HCT116 (cell line): ENCODE measurements at regions of chr18 and their contacts with region 1.

Region 1: DNA sequence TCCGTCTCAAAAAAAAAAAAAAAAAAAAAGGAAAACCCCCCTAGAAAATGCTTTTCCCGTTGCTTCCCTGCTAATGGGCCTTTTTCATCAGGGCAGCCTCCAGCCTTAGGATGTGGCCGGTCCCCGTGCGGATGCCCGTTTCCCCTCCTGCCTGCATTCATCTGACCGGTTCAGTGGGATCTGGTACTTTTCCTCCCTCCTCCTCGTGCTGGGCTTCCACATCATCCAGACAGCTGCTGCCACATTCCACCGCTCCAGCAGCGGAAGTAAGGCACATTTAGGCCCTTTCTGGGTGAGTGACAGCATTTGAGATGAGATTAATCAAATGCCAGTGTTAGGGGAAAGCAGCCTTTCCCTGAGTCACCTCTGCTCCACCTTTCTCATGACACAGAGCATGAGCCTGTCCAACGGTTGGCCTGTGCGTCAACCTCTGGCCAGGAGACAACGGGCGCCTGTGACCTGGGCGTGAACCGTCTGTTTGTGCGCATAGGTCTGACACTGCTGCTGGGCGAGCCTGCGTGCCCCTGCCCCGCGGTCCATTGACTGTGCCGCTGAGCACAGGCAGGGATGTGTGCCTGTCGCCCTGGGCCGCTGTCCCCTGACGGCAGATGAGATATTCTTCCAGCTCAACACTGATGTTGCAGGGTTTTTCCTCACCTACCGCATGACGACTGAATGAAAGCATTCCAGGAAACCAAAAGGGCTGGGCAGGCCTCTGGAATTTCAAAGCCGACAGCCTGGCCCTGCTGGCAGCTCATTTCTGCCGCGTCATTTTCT is 174.0 kb downstream of the TGIF1 start:
- DNase-seq: peak; percentile 96
- ATAC-seq: peak; percentile 77
- H3K4me3 ChIP-seq: peak overlapping the region; percentile 30 to 31
- H3K27ac ChIP-seq: peak overlapping the region; percentile 100
- H3K4me1 ChIP-seq: peaks cover 86 to 96% of the 10 kb centered on the region in 2 experiments
- H3K27me3 ChIP-seq: no peaks in the 10 kb centered on the region
- CTCF ChIP-seq: no peak
- POLR2A ChIP-seq: no peak
- RAD21 ChIP-seq: no peak

Region 2: DNA sequence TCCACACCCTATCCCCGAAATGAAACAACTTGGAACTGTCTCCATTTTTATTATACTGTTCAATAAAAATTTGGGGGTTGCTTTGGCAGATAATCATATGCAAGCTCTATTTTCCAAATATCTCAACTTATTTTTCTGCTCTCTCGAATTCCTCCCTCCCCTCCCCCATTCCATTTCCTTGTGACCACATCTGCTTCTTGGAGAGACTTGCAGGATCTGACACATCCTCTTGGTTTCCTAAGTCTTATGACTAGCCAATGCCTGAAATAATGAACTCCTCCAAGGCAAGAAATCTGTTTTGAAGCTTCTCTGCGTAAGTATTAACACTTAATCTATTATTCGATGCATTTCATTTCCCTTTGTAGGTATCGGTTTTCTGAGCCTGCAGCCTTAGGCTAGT is 157.9 kb before region 1 on chr18:
- CTCF ChIA-PET with region 1: no interaction called
- POLR2A ChIA-PET with region 1: no interaction called
- RAD21 ChIA-PET with region 1: no interaction called
- intact Hi-C with region 1: no loop called
- DNase-seq: no peak
- ATAC-seq: no peak
- H3K4me3 ChIP-seq: no peak overlapping the region
- H3K27ac ChIP-seq: peak overlapping the region; percentile 35; the same call in 1 of the 2 replicates
- H3K4me1 ChIP-seq: peaks cover 37 to 38% of the 10 kb centered on the region in 2 experiments
- H3K27me3 ChIP-seq: no peaks in the 10 kb centered on the region
- CTCF ChIP-seq: no peak
- POLR2A ChIP-seq: no peak
- RAD21 ChIP-seq: no peak

Region 3: DNA sequence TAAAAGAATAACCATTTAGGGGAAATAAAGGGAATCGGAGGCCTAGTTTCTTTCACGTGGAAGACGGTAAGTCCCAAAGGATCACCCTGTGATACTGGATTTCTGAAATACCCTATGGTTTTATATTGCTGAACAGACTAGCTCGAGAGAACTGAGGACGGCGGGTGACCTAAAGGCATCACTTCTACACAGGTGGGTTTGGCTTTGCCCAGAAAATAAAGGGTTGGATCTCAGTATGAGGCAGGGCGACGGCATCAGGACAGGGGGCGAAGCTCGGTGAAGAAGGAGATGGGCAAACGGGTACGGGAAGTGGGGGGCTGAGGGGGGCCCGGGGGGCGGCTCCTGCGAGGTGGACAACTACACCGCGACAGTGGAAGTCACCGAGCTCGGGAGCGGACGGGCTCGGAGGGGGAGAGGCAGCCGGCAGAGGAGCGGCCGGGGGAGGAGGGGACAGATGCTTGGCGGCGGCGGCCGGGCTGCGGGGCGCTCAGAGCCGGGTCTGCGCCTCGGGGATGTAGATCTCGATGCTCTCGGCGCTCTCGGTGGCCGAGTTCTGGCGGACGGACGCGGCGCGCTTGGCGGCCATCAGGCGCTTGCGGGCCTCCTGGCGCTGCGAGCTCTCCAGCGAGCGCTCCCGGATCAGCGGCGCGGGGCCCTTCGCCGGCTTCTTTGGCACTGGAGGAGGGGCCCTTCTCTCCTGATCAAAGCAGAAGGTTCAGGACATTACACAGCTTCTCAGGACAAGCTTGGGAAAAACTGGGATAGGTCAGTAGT is 125.1 kb before region 1 on chr18:
- CTCF ChIA-PET with region 1: no interaction called
- POLR2A ChIA-PET with region 1: no interaction called
- RAD21 ChIA-PET with region 1: no interaction called
- intact Hi-C with region 1: no loop called
- DNase-seq: no peak
- ATAC-seq: no peak
- H3K4me3 ChIP-seq: no peak overlapping the region
- H3K27ac ChIP-seq: no peak overlapping the region
- H3K4me1 ChIP-seq: no peaks in the 10 kb centered on the region
- H3K27me3 ChIP-seq: no peaks in the 10 kb centered on the region
- CTCF ChIP-seq: no peak
- POLR2A ChIP-seq: no peak
- RAD21 ChIP-seq: no peak

Region 4: DNA sequence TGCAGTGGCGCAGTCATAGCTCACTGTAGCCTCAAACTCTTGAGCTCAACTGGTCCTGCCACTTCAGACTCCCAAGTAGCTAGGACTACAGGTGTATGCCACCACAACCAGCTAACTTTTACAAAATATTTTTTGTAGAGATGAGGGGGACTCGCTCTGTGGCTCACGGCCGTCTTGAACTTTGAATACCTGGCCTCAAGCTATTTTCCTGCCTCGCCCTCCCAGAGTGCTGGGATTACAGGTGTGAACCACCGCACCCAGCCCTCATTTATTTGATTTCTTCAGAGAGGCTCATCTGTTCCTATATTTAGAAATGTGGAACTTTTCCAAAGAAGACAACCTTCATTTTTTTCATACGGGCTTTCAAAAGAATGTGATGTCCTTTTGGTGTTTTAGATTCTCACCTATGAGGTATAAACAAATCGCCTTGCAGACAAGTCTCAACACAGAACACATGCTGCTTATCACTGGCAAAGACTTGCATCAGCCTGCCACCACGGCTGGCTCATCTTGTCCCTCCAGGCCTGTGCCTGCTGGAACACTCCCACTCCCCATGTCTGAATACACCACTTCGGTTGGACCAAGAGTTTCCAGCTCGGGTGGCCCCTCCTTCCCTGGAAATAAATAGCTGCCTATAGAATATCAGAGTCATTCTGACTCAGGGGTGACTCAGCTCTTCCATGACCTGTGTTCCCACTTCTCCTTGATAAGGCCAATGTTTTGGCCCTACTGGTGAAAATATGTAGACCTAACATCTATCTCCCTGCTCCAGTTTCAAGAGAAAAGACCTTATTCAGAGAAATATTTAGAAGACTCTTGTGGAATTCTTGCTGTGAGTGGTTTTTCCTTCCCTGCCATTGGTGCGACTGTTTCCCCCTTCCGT is 28.7 kb after region 1 on chr18:
- CTCF ChIA-PET with region 1: no interaction called
- POLR2A ChIA-PET with region 1: interaction called, 266 read pairs
- RAD21 ChIA-PET with region 1: interaction called in 1 of 2 experiments, 4 read pairs
- intact Hi-C with region 1: loop called (anchors 1 kb)
- DNase-seq: peak; percentile 98
- ATAC-seq: peak; percentile 72
- H3K4me3 ChIP-seq: peak overlapping the region; percentile 39 to 52
- H3K27ac ChIP-seq: peak overlapping the region; percentile 96
- H3K4me1 ChIP-seq: peaks cover 92 to 93% of the 10 kb centered on the region in 2 experiments
- H3K27me3 ChIP-seq: no peaks in the 10 kb centered on the region
- CTCF ChIP-seq: peak in 2 of 3 experiments; percentile 7 to 13; a peak in 1 of 6 replicates
- POLR2A ChIP-seq: no peak
- RAD21 ChIP-seq: no peak

Region 5: GRCh38 chr18:3660739-3661515 is 37.0 kb after region 1 on chr18:
- CTCF ChIA-PET with region 1: interaction called, 28 read pairs
- POLR2A ChIA-PET with region 1: interaction called, 91 read pairs
- RAD21 ChIA-PET with region 1: interaction called, 3 to 5 read pairs
- intact Hi-C with region 1: loop called (anchors 1 kb)
- DNase-seq: no peak
- ATAC-seq: no peak
- H3K4me3 ChIP-seq: no peak overlapping the region
- H3K27ac ChIP-seq: peak overlapping the region; percentile 54
- H3K4me1 ChIP-seq: peaks cover 51 to 75% of the 10 kb centered on the region in 2 experiments
- H3K27me3 ChIP-seq: no peaks in the 10 kb centered on the region
- CTCF ChIP-seq: no peak
- POLR2A ChIP-seq: no peak
- RAD21 ChIP-seq: no peak

Region 6: DNA sequence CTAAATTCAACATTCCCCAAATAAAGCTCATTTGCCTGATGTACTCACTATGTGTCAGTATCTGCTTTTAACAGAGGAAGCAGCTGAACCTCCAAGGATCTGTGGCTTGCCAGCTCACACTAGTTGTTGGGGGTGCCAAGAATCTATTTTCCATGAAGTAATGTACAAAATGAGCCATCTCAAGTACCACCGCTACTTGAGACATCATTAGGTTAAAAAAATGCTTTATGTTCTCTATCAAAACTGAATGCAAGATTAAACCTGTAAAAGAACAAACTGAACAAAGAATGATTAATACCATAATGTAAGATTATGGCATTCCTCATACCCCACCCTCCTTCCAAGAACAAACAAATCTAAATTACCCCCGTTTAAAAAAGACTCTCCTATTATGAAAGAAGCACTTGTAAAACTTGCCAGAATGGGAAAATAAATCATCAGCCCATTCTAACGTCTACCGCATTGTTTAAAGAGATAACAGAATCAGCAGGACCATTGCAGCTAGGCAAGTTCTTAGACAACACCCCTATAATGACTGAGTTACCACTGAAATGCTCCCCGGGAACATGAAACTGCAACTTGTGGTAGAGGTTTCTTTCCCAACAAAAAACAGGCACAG is 359.5 kb after region 1 on chr18:
- CTCF ChIA-PET with region 1: no interaction called
- POLR2A ChIA-PET with region 1: no interaction called
- RAD21 ChIA-PET with region 1: no interaction called
- intact Hi-C with region 1: no loop called
- DNase-seq: no peak
- ATAC-seq: no peak
- H3K4me3 ChIP-seq: no peak overlapping the region
- H3K27ac ChIP-seq: no peak overlapping the region
- H3K4me1 ChIP-seq: no peaks in the 10 kb centered on the region
- H3K27me3 ChIP-seq: no peaks in the 10 kb centered on the region
- CTCF ChIP-seq: no peak
- POLR2A ChIP-seq: no peak
- RAD21 ChIP-seq: no peak